GM12878 (cell line): ENCODE measurements at regions of chr1 and their contacts with region 1.

Region 1: GRCh38 chr1:160232911-160233310 is 27.7 kb downstream of the PEA15 start:
- DNase-seq: no peak
- ATAC-seq: no peak
- H3K4me3 ChIP-seq: no peak overlapping the region
- H3K27ac ChIP-seq: no peak overlapping the region
- H3K4me1 ChIP-seq: peaks cover 4% of the 10 kb centered on the region; the same call in 1 of the 2 replicates
- H3K27me3 ChIP-seq: no peaks in the 10 kb centered on the region
- CTCF ChIP-seq: no peak
- EP300 ChIP-seq: no peak
- POLR2A ChIP-seq: no peak
- RAD21 ChIP-seq: no peak

Region 2: DNA sequence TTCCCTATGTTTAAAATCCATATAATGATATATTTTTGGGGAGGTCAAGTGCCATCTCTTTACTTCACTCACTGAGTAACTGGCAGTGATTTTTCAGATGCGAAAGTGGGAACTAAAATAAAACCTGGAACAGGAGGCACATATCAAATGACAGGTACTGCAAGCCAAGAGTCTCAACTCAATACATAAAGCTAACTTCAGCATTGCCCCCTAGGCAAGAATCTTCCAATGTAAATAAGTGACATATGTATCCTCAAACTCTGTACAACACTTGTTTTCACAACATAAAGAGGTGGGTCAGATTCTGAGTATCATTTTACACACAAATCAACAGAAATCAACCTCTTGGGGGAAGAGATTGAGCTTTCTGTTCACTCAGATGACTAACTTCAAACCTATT is 11.3 kb after region 1 on chr1:
- CTCF ChIA-PET with region 1: interaction called, 40 read pairs
- POLR2A ChIA-PET with region 1: no interaction called
- RAD21 ChIA-PET with region 1: no interaction called
- SMC1A ChIA-PET with region 1: interaction called, 24 read pairs
- in situ Hi-C with region 1: no loop called
- intact Hi-C with region 1: no loop called
- DNase-seq: no peak
- ATAC-seq: no peak
- H3K4me3 ChIP-seq: no peak overlapping the region
- H3K27ac ChIP-seq: no peak overlapping the region
- H3K4me1 ChIP-seq: no peaks in the 10 kb centered on the region
- H3K27me3 ChIP-seq: no peaks in the 10 kb centered on the region
- CTCF ChIP-seq: no peak
- EP300 ChIP-seq: no peak
- POLR2A ChIP-seq: no peak
- RAD21 ChIP-seq: no peak

Region 3: DNA sequence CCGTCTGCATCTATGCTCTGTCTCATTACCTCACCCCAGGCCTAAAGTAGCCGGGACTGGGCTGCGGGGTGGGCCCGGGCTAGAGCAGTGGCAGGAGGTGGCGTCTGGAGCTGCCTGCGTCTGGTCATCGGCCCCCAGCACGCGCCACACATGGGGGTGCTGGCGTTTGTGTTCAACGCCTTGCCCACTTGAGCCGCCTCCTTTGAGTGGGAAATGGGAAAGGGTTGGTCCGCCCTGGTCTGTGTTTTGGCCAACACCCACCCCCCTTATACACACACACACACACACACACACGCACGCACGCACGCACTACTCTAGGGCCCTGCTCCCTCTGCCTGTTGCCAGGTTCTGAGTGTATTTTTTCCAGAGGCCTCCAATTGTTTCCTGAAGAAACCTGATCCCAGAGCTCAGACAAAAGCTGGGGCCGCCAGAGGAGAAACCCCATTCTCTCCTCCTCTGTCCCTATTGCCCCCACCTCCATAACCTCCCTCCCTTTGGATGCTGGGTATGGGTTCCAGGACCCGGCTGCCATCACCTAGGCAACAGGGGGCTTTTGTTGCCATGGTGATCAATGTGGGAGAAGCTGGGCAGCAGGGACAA is 177.6 kb after region 1 on chr1:
- CTCF ChIA-PET with region 1: no interaction called
- POLR2A ChIA-PET with region 1: no interaction called
- RAD21 ChIA-PET with region 1: no interaction called
- SMC1A ChIA-PET with region 1: no interaction called
- in situ Hi-C with region 1: no loop called
- intact Hi-C with region 1: no loop called
- DNase-seq: no peak
- ATAC-seq: no peak
- H3K4me3 ChIP-seq: no peak overlapping the region
- H3K27ac ChIP-seq: no peak overlapping the region
- H3K4me1 ChIP-seq: no peaks in the 10 kb centered on the region
- H3K27me3 ChIP-seq: no peaks in the 10 kb centered on the region; a peak in 1 of 4 replicates
- CTCF ChIP-seq: no peak
- EP300 ChIP-seq: no peak
- POLR2A ChIP-seq: no peak
- RAD21 ChIP-seq: no peak